SK-N-SH (cell line): ENCODE measurements at regions of chr1 and their contacts with region 1.

Region 1: DNA sequence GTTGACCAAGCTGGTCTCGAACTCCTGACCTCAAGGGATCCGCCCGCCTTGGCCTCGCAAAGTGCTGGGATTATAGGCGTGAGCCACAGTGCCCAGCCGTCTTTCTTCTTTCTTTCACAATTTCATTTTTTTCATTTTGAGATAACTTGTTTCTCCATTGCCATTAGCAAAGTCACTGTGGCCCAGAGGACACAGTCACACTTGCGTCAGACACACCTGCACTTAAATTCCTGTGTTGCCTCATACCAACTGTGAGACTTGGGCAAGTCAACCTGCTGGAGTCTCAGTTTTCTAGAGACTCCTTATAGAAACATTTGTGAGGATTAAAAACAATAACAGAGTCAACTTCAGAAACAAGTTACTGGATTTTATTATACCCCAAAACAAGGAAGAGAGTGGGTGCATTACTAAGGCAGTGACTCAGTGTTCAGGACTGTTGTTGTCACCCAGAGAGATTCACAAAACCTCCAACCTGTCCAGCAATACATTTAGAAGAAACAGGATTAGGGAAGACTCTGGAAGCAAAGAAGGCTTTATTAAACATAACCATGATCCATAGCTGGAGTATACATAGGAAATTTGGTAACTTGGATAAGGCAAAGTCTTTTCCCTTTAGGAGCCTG is 2.6 kb downstream of the TEDDM1 start:
- DNase-seq: no peak
- H3K4me3 ChIP-seq: no peak overlapping the region
- H3K27ac ChIP-seq: no peak overlapping the region
- H3K4me1 ChIP-seq: peaks cover 0 to 3% of the 10 kb centered on the region in 2 experiments; a peak in 2 of 4 replicates
- H3K27me3 ChIP-seq: no peaks in the 10 kb centered on the region
- CTCF ChIP-seq: no peak
- EP300 ChIP-seq: no peak
- RAD21 ChIP-seq: no peak

Region 2: DNA sequence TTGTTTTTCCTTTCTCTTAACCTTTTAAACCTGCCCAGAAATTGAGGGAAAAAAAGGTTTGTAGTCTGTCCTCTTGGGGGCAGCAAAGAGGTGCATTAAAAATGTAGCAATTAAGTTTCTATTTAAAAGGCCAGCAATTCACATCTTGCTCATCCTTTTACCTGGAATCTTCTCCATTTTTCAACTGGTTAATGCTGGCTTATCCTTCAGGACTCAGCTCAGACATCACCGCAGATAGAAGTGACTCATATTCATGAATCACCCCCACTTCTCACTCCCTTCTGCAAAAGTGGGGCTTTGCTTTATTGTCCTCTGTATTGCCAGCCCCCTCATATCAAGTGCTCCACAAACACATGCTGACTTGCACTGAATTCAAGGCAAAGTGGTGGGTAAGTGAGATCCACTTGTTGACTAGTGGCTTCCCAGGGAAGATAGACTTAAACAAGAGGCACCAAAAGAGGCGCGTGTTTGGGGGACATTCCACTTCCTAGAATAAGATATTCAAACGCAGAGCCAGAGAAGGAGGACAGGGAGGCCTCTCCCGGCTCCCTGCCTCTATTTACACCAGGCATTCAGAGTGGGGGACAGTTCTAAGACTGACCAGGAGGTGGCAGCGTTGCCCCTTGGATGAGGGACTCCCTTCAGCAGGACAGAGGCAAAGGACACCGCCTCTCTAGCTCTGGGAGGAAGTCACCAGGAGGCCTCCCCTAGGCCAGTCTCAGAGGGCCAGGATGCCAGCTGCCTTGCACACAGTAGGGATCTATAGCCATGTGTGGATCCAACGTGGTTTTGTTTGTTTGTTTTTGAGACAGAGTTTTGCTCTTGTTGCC is 313.2 kb before region 1 on chr1:
- CTCF ChIA-PET with region 1: interaction called, 70 read pairs
- POLR2A ChIA-PET with region 1: no interaction called
- DNase-seq: peak; percentile 81
- H3K4me3 ChIP-seq: peak overlapping the region in 1 of 2 experiments; percentile 40; a peak in 1 of 4 replicates
- H3K27ac ChIP-seq: no peak overlapping the region
- H3K4me1 ChIP-seq: no peaks in the 10 kb centered on the region; a peak in 1 of 4 replicates
- H3K27me3 ChIP-seq: no peaks in the 10 kb centered on the region
- CTCF ChIP-seq: peak; percentile 56
- EP300 ChIP-seq: no peak
- RAD21 ChIP-seq: peak; percentile 84

Region 3: GRCh38 chr1:182135946-182136345 is 261.9 kb before region 1 on chr1:
- CTCF ChIA-PET with region 1: interaction called, 350 read pairs
- POLR2A ChIA-PET with region 1: no interaction called
- DNase-seq: no peak
- H3K4me3 ChIP-seq: no peak overlapping the region
- H3K27ac ChIP-seq: no peak overlapping the region
- H3K4me1 ChIP-seq: no peaks in the 10 kb centered on the region
- H3K27me3 ChIP-seq: no peaks in the 10 kb centered on the region
- CTCF ChIP-seq: no peak
- EP300 ChIP-seq: no peak
- RAD21 ChIP-seq: no peak

Region 4: DNA sequence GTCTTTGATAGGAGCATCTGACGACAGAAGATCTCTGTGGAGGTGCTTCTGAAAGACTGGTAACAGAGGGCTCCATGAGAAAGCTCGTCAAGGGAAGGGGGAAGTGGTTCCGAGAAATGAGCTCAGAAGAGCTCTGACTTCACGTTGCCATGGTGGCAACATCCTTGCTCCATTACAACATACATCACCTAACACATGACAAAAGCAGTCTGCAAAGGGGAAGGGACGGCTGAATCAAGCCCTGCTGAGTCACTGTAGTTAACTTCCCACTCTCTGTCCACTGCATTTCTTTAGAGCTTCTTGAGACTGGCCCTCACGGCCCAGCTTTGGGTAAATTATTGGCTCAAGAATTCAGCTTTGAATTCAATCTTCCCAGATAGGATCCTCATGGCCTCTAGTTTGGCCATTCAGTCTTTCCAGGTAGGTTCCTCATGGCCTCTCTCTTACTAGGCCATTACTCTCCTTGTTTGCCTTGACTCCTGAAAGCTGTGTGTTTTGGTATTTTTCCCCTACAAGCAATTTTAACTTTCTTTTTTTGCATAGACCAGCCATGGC is 248.4 kb before region 1 on chr1:
- CTCF ChIA-PET with region 1: interaction called, 350 read pairs
- POLR2A ChIA-PET with region 1: interaction called, 31 read pairs
- DNase-seq: no peak
- H3K4me3 ChIP-seq: no peak overlapping the region
- H3K27ac ChIP-seq: no peak overlapping the region
- H3K4me1 ChIP-seq: peaks cover 0 to 5% of the 10 kb centered on the region in 2 experiments; a peak in 1 of 4 replicates
- H3K27me3 ChIP-seq: no peaks in the 10 kb centered on the region
- CTCF ChIP-seq: no peak
- EP300 ChIP-seq: no peak
- RAD21 ChIP-seq: no peak

Region 5: DNA sequence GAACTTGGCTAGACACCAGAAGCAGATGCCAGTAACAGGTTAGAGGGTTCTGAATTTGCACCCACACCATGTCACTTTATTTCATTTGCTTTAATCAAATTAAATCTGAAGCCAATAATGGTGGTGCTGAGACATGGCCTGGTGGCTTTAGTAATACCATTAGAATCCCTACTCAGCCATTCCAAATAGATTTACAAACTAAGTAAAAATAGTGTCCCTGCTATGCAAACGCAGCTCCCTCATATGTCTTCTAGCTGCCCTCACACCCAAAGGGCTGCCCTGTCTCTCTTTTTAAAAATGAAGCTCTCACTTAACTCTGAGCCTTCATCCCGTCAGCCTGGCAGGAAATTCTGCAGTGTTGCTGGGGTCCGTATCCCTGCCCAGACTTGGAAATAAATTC is 27.4 kb before region 1 on chr1:
- CTCF ChIA-PET with region 1: interaction called, 12 read pairs
- POLR2A ChIA-PET with region 1: no interaction called
- DNase-seq: no peak
- H3K4me3 ChIP-seq: no peak overlapping the region
- H3K27ac ChIP-seq: no peak overlapping the region
- H3K4me1 ChIP-seq: no peaks in the 10 kb centered on the region
- H3K27me3 ChIP-seq: no peaks in the 10 kb centered on the region; the same call in 1 of the 2 replicates
- CTCF ChIP-seq: no peak
- EP300 ChIP-seq: no peak
- RAD21 ChIP-seq: no peak

Region 6: GRCh38 chr1:182415789-182416188 is 17.9 kb after region 1 on chr1:
- CTCF ChIA-PET with region 1: interaction called, 20 read pairs
- POLR2A ChIA-PET with region 1: no interaction called
- DNase-seq: no peak
- H3K4me3 ChIP-seq: no peak overlapping the region
- H3K27ac ChIP-seq: no peak overlapping the region
- H3K4me1 ChIP-seq: no peaks in the 10 kb centered on the region
- H3K27me3 ChIP-seq: no peaks in the 10 kb centered on the region; the same call in 1 of the 2 replicates
- CTCF ChIP-seq: no peak
- EP300 ChIP-seq: no peak
- RAD21 ChIP-seq: no peak